Right ventricle myocardium inferior (tissue), 1 donor: ENCODE measurements at regions of chr3 and their contacts with region 1.

Region 1: DNA sequence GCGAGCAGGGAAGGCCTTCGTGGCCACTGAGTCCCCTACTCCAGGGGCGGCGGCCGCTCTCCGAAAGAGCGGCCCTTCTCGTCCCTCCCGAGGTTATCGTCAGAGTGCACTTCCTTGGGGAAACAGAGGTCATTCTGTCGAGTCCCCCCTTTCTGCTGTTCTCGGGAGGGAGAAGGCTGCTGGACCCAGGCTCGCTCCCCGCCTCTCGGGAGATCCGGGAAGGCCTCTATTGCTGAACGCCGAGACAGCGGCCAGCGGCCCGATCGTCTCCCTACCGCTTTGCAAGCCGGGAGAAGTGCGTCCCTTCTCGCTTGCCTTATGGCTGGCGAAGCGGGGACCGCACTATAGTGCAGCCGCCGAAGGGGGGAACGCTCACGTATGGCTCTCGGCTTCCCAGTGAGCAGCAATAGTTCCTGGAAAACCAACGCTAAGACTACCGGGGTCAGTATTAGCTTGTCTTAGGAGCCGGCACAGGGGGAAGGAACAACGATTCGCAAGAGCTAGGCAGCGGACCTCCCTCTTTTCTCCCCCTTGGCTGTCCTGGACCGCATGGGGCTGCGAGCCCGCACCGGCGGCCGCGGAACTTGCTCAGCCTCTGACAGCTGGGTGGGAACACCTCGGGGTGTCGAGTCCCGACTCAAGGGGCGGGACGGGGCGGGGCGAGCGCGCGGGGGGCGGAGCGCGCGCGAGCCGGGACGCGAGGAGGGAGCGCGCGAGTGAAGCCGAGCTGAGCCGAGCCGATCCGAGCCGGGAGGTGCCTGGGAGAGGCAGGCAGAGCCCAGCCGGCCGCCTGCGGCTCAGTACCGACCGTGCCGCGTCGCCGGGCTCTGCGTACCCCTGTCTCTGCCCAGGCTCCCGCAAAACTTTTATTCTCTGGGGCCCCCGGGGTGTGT is 930 bp upstream of the PPM1L start:
- DNase-seq: peak; percentile 95
- ATAC-seq: peak; percentile 95

Region 2: DNA sequence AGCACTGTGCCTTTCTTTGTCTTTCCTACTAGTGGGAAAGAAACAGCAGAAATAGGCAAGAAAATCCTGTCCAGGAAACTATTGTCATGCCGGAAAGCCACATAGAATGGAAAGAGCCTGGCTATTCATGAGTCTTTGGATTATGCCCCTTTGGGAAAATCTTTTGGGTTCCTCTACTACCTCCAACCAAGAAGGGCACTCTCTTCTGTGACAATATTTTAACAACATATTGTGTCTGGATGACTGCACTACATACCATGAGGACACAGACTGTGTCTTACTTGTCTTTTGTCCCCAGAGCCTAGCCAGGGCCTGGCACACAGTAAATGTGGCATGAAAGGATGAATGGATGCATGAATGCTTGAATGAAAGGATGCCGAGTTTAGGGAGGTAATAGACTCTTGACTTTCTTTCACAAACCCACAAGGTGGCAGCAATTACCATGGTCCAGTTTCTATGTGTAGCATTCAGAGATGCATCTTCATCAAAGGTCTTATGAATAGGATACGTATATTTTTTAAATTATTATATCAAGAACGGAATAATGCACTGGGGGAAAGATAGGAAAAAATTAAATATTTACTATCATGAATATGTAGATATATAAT is 47.8 kb before region 1 on chr3:
- intact Hi-C with region 1: loop called (anchors 10 kb)
- DNase-seq: no peak
- ATAC-seq: peak; percentile 71

Region 3: DNA sequence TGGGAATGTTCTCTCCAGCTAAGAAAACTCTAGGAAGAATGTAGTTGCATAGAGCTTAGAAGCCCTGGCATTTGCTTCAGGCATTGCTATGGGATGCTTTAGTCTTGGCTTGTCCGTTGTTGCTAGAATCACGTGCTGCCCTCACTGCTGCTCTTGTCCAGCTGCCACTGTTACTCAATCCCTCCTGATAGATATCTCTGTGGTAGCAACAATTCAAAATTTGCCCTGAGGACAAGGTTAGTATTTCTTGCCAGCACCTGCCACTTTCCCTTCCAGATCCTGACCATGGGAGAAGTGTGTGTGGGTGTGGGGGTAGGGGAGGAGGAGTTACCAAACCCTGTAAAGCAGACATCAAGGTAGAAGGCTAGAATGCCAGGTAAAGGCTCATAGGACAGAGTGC is 114.7 kb after region 1 on chr3:
- intact Hi-C with region 1: loop called (anchors 5 kb)
- DNase-seq: no peak
- ATAC-seq: peak; percentile 88

Region 4: GRCh38 chr3:160941885-160942494 is 186.9 kb after region 1 on chr3:
- intact Hi-C with region 1: loop called (anchors 5 kb)
- DNase-seq: no peak
- ATAC-seq: peak; percentile 72